AG04450 (cell line): ENCODE measurements at regions of chr21 and their contacts with region 1.

Region 1: DNA sequence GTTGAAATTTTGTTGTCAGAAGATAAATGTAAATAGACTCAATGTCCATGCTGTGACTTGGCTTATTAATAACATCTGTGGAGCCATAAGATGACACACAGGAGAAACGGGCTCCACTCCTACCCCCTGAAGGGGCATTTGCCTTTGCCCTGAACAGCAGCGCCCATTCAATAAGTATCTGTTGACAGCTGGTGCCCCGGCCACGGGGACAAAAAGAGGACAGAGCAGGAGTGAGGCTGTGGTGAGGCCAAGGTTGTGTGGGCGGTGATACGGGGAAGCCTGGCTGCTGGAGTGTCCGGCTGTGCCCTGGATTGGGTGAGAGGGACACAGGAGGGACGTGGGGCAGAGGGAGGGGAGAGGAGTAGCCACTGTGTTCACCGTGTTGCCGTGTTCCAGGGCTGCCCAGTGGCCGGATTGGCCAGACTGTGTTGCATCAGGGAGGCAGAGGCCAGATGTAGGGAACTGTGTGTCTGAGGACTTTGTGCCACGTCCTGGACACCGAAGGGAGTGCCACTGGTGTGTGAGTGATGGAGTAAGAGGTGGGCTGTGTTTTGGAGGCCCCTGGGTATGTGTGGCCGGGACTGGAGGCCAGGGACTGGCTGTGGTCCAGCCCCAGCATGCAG is 15.1 kb downstream of the PRMT2 start:
- DNase-seq: no peak
- H3K4me3 ChIP-seq: no peak overlapping the region
- H3K27ac ChIP-seq: no peak overlapping the region
- H3K27me3 ChIP-seq: no peaks in the 10 kb centered on the region
- CTCF ChIP-seq: no peak

Region 2: GRCh38 chr21:45460611-45461368 is 1189.8 kb before region 1 on chr21:
- CTCF ChIA-PET with region 1: no interaction called
- POLR2A ChIA-PET with region 1: no interaction called
- DNase-seq: peak; percentile 61
- H3K4me3 ChIP-seq: no peak overlapping the region
- H3K27ac ChIP-seq: peak overlapping the region; percentile 91
- H3K27me3 ChIP-seq: no peaks in the 10 kb centered on the region
- CTCF ChIP-seq: no peak

Region 3: DNA sequence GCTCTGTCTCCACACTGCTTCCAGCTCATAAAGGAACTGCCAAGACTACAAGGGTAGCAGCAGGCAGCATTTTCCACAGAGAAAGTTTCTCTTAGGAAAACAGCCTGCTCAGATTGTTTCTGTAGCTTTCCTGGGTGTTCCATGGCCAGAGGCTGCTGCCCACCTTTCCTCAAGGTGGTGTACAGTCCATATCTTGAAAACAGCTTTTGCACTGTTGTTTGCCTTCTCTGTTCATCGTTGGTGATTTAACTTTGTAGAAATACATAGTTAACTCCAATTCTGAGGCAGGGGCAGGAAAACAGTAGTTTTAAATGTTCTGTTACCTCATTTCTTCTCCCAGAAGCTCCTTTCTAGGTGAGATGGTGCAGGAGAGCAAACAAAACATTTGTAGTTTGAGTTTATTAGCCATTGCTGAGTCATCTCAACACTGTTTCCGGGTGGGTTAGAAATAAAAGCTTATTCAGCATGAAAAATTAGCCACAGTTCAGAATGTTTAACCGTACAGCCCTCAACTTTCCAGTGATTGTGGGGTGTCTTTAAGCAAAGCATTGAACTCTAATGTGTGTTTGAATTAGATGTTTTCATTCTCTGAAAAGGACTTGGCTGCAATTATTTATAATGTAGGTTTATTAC is 150.2 kb before region 1 on chr21:
- CTCF ChIA-PET with region 1: no interaction called
- POLR2A ChIA-PET with region 1: no interaction called
- DNase-seq: no peak
- H3K4me3 ChIP-seq: no peak overlapping the region
- H3K27ac ChIP-seq: peak overlapping the region; percentile 47
- H3K27me3 ChIP-seq: no peaks in the 10 kb centered on the region
- CTCF ChIP-seq: no peak

Region 4: DNA sequence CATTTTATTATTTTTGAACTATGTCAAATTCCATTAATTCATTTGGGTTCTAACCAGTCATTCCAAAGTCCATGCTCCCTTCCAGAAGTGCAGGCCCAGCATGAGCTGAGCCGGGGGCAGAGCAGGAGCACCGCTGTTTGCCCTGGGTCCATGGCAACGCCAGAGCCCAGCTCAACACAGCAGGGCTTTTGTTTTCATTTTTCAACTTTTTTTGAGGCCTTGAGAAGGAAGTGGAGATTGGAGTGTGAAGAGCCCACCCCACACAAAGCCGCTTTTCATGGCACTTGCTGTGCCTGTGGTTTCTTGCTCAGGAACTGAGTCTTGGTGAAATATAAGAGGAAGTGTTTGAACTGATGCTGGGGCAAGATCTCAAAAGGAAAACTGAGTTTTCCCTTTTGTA is 28.4 kb before region 1 on chr21:
- CTCF ChIA-PET with region 1: no interaction called
- POLR2A ChIA-PET with region 1: no interaction called
- DNase-seq: no peak
- H3K4me3 ChIP-seq: no peak overlapping the region
- H3K27ac ChIP-seq: no peak overlapping the region
- H3K27me3 ChIP-seq: peaks cover 4% of the 10 kb centered on the region
- CTCF ChIP-seq: no peak

Region 5: DNA sequence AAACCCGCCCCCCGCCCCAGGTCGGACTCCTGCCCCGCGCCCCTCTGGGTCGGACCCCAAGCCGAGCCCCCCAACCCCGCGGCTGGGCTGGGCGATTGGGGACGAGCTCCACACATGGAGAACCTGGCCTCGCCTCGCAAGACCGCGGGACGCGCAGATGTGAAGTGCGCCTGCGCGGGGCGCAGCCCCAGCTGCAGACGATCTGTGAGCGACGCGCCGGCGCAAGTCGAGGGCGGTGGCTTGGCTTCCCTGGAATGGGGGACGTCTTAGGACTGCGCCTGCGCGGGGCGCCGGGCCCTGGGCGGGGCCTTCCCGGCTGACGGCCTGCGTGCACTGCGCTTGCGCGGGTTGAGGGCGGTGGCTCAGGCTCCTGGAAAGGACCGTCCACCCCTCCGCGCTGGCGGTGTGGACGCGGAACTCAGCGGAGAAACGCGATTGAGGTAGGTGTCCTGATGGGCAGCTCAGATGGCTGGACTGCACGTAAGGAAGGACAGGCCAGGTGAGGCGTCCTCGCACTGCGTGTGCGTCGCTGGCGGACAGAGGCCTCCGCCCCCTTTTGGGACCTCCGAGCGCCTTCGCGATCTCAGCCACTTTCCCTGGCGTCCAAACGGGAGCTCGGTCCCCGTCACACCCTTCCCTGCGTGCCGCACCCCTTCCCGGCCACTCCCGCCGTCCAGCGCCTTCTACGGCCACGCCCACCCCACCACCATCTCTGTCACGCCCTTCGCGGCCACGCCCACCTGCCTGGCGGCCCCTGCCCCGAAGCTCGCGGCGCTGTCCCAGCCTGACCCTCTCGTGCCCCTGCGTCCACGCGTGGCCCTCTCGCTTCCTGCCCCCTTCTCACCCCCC is 15.0 kb before region 1 on chr21 and contains the start of gene PRMT2:
- CTCF ChIA-PET with region 1: interaction called, 11 read pairs
- POLR2A ChIA-PET with region 1: interaction called, 5 read pairs
- DNase-seq: peak; percentile 95
- H3K4me3 ChIP-seq: peak within 1 kb of the TSS; percentile 100
- H3K27ac ChIP-seq: peak within 1 kb of the TSS; percentile 94
- H3K27me3 ChIP-seq: no peaks in the 10 kb centered on the region
- CTCF ChIP-seq: no peak
- polyA plus RNA-seq, gene PRMT2: 140 and 153 TPM in 2 replicates

Region 6: DNA sequence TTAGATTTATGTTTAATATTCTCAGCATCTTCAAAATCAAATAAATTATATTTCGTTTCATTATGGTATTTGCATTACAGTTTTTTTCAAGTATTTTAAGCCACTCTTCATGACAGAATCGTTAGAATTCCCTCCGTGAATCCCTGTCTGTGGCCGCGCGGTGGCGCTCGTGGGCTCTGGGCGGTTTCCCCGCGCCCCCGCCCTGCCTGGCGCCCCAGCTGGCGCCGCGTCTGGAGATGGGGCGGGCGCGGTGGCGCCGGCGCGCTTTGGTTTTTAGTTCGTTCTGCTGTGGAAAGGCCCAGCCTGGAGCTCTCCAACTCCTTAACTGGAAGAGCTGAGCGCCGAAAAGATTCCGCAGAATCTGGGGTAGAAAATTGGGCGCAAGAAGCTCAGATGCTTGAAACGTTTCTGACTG is 10.6 kb after region 1 on chr21:
- CTCF ChIA-PET with region 1: interaction called, 14 read pairs
- POLR2A ChIA-PET with region 1: interaction called, 4 read pairs
- DNase-seq: peak; percentile 54
- H3K4me3 ChIP-seq: peak overlapping the region; percentile 29
- H3K27ac ChIP-seq: no peak overlapping the region
- H3K27me3 ChIP-seq: no peaks in the 10 kb centered on the region
- CTCF ChIP-seq: peak; percentile 79